Activated CD4-positive, alpha-beta memory T cell treated with anti-CD3 and anti-CD28 coated beads for 36 hours (primary cell): ENCODE measurements at regions of chr2 and their contacts with region 1.

Region 1: DNA sequence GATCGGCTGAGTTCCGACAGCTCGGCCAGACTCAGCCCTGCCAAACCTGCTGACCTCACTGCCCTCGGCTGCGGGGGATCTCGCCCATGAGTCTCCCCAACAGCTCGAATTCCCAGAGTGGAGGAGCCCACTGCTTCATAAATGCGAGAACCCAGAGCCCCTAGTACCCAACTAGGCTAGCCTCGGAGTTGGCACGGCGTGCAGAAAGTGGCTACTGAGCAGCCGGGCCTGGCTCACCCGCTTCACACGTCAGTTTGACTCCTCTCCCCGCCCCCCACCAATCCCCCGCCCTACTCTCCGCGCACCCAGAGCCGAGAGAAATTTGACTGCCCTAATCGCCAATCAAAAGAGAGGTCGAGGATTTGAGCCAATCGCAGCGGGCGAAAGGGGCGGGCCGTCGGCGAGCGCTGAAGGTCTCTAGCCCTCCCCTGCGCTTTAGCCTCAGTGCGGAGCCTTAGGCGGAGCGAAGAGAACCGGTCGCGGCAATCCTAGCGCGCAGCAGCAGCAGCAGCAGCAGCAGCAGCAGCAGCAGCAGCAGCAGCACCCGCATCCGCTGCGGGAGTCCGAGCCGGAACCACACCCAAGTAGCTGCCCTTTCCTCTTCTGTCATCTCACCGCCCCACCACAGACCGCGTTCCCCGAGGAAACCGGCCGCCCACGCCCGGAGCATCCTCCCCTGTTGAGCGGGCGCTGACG is at the start of gene GLS:
- DNase-seq: peak; percentile 98
- H3K4me3 Mint-ChIP-seq: peak within 1 kb of the TSS; percentile 98
- H3K27ac Mint-ChIP-seq: peak within 1 kb of the TSS; percentile 99
- H3K4me1 Mint-ChIP-seq: peaks cover 36% of the 10 kb centered on the region
- H3K27me3 Mint-ChIP-seq: peaks cover 4% of the 10 kb centered on the region
- total RNA-seq, gene GLS: 209 to 210 TPM

Region 2: GRCh38 chr2:190534310-190535120 is 346.0 kb before region 1 on chr2 and contains the start of gene NEMP2:
- CTCF ChIA-PET with region 1: no interaction called
- POLR2A ChIA-PET with region 1: interaction called, 3 read pairs
- intact Hi-C with region 1: loop called (anchors 5 kb)
- DNase-seq: peak; percentile 86
- H3K4me3 Mint-ChIP-seq: peak within 1 kb of the TSS; percentile 95
- H3K27ac Mint-ChIP-seq: peak within 1 kb of the TSS; percentile 99
- H3K4me1 Mint-ChIP-seq: peaks cover 57% of the 10 kb centered on the region
- H3K27me3 Mint-ChIP-seq: no peaks in the 10 kb centered on the region
- total RNA-seq, gene NEMP2: 28.8 to 30.0 TPM

Region 3: DNA sequence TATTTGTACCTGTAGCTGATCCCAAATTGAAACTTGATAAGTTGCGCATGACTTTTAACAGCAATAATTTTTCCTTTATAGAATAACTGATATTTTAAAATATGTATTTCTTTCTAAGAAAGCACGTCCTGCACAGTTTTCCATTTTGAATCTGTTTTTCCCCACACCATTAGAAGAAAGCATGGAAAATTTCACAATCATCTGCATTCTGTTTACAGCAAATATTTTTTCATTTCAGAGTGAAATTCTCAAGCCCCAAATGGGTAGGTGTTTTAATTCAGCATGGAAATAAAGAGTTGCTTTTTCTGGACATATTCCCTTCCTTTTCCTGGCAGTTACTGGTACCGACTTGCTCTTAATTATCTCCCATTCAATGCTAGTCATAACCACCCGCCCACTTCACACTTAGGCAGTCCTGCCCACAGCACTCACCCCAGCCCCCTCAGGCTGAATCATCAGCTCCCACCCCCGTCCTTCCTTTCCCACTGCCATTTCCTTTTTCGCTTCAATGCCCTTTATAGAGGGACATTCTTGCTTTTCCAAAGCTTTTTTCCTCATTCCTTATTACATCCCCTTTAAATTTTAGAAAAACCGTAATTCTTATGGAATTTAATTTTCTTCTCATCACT is 89.1 kb before region 1 on chr2:
- CTCF ChIA-PET with region 1: interaction called, 3 read pairs
- POLR2A ChIA-PET with region 1: interaction called, 4 read pairs
- intact Hi-C with region 1: loop called (anchors 5 kb)
- DNase-seq: peak; percentile 73
- H3K4me3 Mint-ChIP-seq: no peak overlapping the region
- H3K27ac Mint-ChIP-seq: peak overlapping the region; percentile 61
- H3K4me1 Mint-ChIP-seq: peaks cover 55% of the 10 kb centered on the region
- H3K27me3 Mint-ChIP-seq: no peaks in the 10 kb centered on the region

Region 4: GRCh38 chr2:190858817-190859216 is 21.7 kb before region 1 on chr2:
- CTCF ChIA-PET with region 1: interaction called, 3 read pairs
- POLR2A ChIA-PET with region 1: interaction called, 9 read pairs
- intact Hi-C with region 1: loop called (anchors 1 kb)
- DNase-seq: no peak
- H3K4me3 Mint-ChIP-seq: no peak overlapping the region
- H3K27ac Mint-ChIP-seq: no peak overlapping the region
- H3K4me1 Mint-ChIP-seq: peaks cover 27% of the 10 kb centered on the region
- H3K27me3 Mint-ChIP-seq: no peaks in the 10 kb centered on the region

Region 5: DNA sequence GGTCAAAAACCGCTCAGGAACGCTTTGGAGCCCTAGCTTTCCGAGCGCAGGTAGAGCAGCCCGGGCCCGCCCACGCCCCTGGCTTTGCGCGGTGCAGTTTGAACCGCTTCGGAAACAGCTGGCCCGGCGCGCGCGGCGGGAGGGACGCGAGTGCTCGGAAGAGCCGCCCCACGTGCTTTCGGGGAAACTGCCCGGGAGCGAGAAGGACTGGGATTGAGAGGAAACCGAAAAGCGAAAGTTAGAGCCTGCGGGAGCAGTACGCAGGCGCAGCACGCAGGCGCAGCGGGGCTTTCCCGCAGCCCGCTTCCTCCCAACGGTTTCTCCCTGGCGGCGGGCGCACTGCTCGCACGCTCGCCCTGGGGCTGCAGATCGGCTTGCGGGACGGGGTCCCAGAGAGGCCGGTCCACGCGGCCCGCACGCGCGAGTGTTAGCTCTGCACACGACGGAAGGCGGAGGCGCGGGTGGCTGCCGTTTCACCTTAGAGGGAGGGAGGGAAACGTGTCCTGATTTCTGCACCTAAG is 139.8 kb after region 1 on chr2:
- CTCF ChIA-PET with region 1: interaction called, 4 read pairs
- POLR2A ChIA-PET with region 1: interaction called, 31 read pairs
- intact Hi-C with region 1: loop called (anchors 2 kb)
- DNase-seq: peak; percentile 97
- H3K4me3 Mint-ChIP-seq: no peak overlapping the region
- H3K27ac Mint-ChIP-seq: no peak overlapping the region
- H3K4me1 Mint-ChIP-seq: peaks cover 34% of the 10 kb centered on the region
- H3K27me3 Mint-ChIP-seq: peaks cover 2% of the 10 kb centered on the region

Region 6: DNA sequence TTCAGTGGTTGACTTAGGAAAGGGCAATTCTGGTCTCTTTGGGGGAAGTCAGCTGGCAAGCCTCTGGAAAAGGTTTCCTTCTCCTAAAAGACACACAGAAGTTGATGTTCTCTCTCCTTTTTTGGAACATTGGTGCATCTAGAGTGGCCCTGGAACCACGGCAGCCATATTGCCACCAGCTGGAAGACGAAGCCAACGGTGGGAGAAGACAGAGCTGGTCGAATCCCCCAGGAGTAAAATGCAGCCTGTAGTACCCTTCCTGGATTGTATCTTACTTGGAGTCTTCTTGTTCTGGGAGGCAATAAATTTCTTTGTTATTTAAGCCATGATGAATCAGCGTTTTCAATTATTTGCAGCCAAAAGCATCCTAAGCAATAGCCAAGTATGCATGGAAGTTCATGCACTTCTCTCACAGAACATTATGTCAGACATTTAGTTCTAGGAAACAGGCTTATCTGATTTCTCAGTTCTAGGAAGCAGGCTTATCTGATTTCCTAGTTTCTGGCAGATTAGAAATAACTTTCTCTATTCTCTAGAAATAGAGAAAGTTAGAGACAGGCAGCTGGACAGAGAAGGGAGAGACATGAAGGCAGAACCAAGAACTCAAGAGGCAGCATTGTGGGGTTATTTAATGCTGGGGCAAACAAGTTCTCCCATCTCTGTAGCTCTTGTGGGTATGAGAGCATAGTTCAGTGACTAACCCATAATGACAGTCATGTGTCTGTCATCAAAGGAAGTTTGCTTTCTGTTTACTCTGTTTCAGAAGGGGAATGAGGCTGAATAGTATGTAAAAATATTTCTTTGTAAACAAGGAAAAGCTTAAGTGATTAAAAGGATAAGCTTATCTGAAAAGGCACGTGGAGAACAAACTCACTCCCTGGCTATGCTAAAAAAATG is 756.9 kb after region 1 on chr2:
- CTCF ChIA-PET with region 1: no interaction called
- POLR2A ChIA-PET with region 1: no interaction called
- intact Hi-C with region 1: loop called (anchors 5 kb)
- DNase-seq: no peak
- H3K4me3 Mint-ChIP-seq: peak overlapping the region; percentile 49
- H3K27ac Mint-ChIP-seq: peak overlapping the region; percentile 89
- H3K4me1 Mint-ChIP-seq: peaks cover 58% of the 10 kb centered on the region
- H3K27me3 Mint-ChIP-seq: no peaks in the 10 kb centered on the region